CD4-positive, alpha-beta T cell (primary cell): ENCODE measurements at regions of chr2 and their contacts with region 1.

Region 1: GRCh38 chr2:19020550-19021476 is 337.6 kb downstream of the OSR1 start:
- DNase-seq: no peak
- ATAC-seq: no peak
- H3K4me3 ChIP-seq: no peak overlapping the region
- H3K4me3 Mint-ChIP-seq: no peak overlapping the region
- H3K27ac ChIP-seq: no peak overlapping the region
- H3K27ac Mint-ChIP-seq: no peak overlapping the region
- H3K4me1 ChIP-seq: no peaks in the 10 kb centered on the region
- H3K4me1 Mint-ChIP-seq: no peaks in the 10 kb centered on the region
- H3K27me3 ChIP-seq: no peaks in the 10 kb centered on the region
- H3K27me3 Mint-ChIP-seq: no peaks in the 10 kb centered on the region
- CTCF ChIP-seq: no peak

Region 2: DNA sequence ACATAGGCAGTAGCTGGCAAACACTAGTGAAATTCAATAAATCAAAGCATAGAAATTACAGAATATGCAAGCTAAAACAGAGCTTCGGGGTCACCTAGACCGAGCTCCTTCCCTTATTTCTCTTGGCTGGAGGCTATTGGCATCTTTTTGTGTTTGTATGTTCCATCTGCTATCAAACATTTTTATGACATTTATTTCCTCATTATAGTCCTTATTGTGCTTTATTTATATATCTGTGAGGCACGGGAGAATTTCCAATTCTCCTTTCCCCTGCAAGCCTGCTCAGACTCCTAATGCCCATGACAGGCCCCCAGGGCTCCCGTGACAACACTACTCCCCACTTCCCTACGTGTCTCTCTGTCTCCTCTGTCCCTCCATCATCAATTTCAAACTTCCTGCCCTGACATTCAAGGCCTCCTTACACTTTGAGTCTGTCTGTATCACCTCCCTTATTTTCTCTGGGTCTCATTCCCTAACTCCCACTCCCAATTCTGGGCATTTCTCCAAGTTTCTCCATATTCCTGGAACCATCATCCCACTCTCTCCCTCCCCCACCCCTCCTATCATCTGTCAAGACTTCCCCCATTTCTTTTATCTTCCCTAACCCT is 20.7 kb after region 1 on chr2:
- CTCF ChIA-PET with region 1: no interaction called
- POLR2A ChIA-PET with region 1: no interaction called
- intact Hi-C with region 1: loop called in 1 of 2 experiments (anchors 2 kb)
- DNase-seq: no peak
- ATAC-seq: no peak
- H3K4me3 ChIP-seq: no peak overlapping the region
- H3K4me3 Mint-ChIP-seq: no peak overlapping the region
- H3K27ac ChIP-seq: no peak overlapping the region
- H3K27ac Mint-ChIP-seq: no peak overlapping the region
- H3K4me1 ChIP-seq: no peaks in the 10 kb centered on the region
- H3K4me1 Mint-ChIP-seq: no peaks in the 10 kb centered on the region
- H3K27me3 ChIP-seq: no peaks in the 10 kb centered on the region
- H3K27me3 Mint-ChIP-seq: no peaks in the 10 kb centered on the region
- CTCF ChIP-seq: no peak